AG04450 (cell line): ENCODE measurements at regions of chr1 and their contacts with region 1.

Region 1: DNA sequence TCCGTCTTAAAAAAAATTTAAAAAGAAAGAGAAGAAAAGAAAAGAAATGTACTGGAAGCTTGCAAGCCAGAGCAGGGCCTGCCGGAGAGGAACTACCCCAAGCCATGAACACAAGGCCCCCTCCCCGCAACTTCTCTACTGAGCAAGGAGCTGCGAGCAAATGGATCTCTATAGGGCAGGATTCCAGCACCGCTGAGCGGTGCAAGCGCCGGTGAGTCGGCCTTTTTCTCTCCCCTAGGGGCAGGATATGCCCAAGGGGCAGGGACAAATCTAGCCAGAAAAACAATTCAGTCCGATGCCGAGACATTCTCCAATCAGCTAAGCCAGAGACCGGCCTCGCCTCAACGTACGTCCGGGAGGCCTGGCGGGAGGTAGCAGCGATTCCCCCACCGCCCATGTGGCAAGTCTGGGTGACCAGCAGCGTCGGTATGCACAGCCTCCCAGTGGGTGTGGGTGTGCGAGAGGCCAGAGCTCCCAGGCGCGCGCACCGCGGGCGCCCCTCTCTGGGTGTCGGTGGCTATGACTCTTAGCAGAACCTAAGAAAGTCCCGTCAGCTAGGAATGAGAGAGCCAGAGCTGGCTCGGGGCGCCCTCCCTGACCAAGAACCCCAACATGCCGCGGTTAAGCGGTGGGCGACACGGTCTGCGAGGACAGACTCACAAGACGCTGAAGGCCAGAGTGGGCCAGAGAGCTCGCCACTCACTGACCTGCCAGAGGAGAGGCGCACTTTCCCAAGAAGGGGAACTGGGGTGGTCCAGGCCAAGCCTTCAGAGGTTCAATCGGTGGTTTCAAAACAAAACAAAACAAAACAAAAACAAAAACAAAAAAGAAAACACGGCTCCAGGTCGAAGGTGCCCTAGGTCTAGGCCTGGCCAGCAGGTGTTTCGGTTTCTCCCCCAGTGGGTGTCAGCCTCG is 1.9 kb downstream of the CSMD2 start:
- DNase-seq: peak; percentile 89
- H3K4me3 ChIP-seq: peak overlapping the region; percentile 68
- H3K27ac ChIP-seq: peak overlapping the region; percentile 77
- H3K27me3 ChIP-seq: peaks cover 6% of the 10 kb centered on the region
- CTCF ChIP-seq: peak; percentile 88

Region 2: GRCh38 chr1:33641104-33641830 is 521.8 kb before region 1 on chr1:
- CTCF ChIA-PET with region 1: interaction called, 104 read pairs
- POLR2A ChIA-PET with region 1: no interaction called
- DNase-seq: no peak
- H3K4me3 ChIP-seq: no peak overlapping the region
- H3K27ac ChIP-seq: peak overlapping the region; percentile 31
- H3K27me3 ChIP-seq: no peaks in the 10 kb centered on the region
- CTCF ChIP-seq: peak; percentile 59

Region 3: DNA sequence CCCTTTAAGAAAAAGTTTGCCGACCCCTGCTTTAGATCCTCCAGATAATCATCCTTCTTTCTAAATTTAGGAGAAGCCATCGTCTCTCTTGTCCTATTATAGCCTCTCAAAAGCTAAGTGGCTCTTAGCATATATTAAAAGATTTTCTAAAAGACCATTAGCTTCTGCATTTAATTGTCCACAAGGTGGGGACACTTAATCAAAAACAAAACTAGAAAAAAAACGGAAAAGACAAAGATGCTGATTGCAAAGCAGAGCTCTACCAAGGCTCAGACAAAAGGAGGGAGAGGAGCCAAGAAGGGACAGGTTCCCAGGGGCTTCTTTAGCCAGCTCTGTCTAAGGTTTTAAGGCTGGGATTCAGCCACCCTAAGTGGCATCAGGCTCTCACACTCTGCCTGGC is 427.5 kb before region 1 on chr1:
- CTCF ChIA-PET with region 1: interaction called, 32 read pairs
- POLR2A ChIA-PET with region 1: interaction called, 5 read pairs
- DNase-seq: no peak
- H3K4me3 ChIP-seq: no peak overlapping the region
- H3K27ac ChIP-seq: no peak overlapping the region
- H3K27me3 ChIP-seq: no peaks in the 10 kb centered on the region
- CTCF ChIP-seq: peak; percentile 47

Region 4: DNA sequence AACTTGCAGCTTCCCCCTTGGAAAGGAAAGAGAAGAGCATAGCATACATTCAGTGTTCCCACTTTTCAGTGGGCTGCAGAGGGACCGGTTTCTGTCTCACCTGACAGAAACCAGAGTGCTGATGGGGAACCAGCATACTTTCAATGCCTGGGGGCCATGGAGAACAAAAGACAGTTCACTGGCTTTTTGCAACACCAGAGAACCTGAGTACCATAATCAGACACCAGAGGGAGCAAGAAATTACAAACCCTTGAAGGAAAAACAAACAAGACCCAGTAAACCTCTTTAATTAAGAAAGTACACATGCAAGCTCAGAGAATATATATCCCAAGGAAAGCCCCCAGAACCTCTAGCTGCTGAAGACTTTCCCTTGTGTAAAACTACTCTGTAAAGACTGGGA is 49.2 kb before region 1 on chr1:
- CTCF ChIA-PET with region 1: interaction called, 17 read pairs
- POLR2A ChIA-PET with region 1: no interaction called
- DNase-seq: no peak
- H3K4me3 ChIP-seq: no peak overlapping the region
- H3K27ac ChIP-seq: no peak overlapping the region
- H3K27me3 ChIP-seq: no peaks in the 10 kb centered on the region
- CTCF ChIP-seq: peak; percentile 36

Region 5: DNA sequence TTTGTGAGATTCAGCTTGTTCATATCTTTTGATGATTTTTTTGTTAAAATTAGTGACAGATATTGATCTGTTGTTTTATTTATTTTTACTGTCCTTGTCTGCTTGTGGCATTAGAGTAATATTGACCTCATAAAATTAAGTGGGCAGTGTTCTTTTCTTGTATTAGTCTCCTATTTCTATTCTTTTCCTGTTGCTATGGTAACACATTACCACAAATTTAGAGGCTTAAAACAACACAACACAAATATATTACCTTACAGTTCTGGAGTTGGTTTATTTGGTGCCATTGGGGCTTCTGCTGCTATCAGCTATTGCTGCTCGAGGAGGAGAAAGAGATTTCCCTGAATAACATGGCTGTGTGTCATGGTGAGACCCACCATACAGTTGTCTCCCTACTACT is 149.3 kb after region 1 on chr1:
- CTCF ChIA-PET with region 1: no interaction called
- POLR2A ChIA-PET with region 1: no interaction called
- DNase-seq: no peak
- H3K4me3 ChIP-seq: no peak overlapping the region
- H3K27ac ChIP-seq: no peak overlapping the region
- H3K27me3 ChIP-seq: no peaks in the 10 kb centered on the region
- CTCF ChIP-seq: no peak